ENCODE measurements at regions of chr3 and their contacts with region 1.

Region 1: DNA sequence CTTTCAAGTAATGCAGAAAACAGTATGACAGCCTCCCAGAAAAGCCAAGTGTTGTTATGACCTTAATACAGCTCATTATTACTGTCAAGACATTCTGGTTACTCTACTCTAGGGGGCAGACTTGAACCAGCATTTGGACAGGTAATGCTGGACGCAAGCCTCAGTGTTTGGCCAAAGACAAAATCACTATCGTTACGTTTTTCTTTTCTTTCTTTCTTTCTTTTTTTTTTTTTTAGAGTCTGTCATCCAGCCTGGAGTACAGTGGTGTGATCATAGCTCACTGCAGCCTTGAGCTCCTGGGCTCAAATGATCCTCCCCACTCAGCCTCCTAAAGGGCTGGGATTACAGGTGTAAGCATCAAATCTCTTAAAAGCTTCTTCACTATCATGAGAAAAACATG is 29.4 kb upstream of the TMEM45A start:
- DNase-seq: peak in 1 of 3 donors; percentile 52
- ATAC-seq: peak; percentile 92 to 96 (median 96)
- H3K4me3 ChIP-seq: no peak overlapping the region
- H3K27ac ChIP-seq: no peak overlapping the region
- H3K4me1 ChIP-seq: no peaks in the 10 kb centered on the region
- H3K27me3 ChIP-seq: no peaks in the 10 kb centered on the region
- CTCF ChIP-seq: peak; percentile 67 to 89 (median 74)
- POLR2A ChIP-seq: no peak

Region 2: GRCh38 chr3:100231668-100232067 is 231.3 kb before region 1 on chr3:
- intact Hi-C with region 1: no loop called
- DNase-seq: no peak
- ATAC-seq: no peak
- H3K4me3 ChIP-seq: no peak overlapping the region
- H3K27ac ChIP-seq: no peak overlapping the region
- H3K4me1 ChIP-seq: no peaks in the 10 kb centered on the region
- H3K27me3 ChIP-seq: no peaks in the 10 kb centered on the region
- CTCF ChIP-seq: no peak
- POLR2A ChIP-seq: no peak

Region 3: GRCh38 chr3:100386437-100387074 is 76.4 kb before region 1 on chr3:
- intact Hi-C with region 1: no loop called
- DNase-seq: no peak
- ATAC-seq: peak; percentile 71 to 83 (median 76)
- H3K4me3 ChIP-seq: no peak overlapping the region
- H3K27ac ChIP-seq: peak overlapping the region in 1 of 3 donors; percentile 7
- H3K4me1 ChIP-seq: peaks cover 0 to 24% (median 7%) of the 10 kb centered on the region in 4 donors
- H3K27me3 ChIP-seq: no peaks in the 10 kb centered on the region
- CTCF ChIP-seq: no peak
- POLR2A ChIP-seq: no peak

Region 4: DNA sequence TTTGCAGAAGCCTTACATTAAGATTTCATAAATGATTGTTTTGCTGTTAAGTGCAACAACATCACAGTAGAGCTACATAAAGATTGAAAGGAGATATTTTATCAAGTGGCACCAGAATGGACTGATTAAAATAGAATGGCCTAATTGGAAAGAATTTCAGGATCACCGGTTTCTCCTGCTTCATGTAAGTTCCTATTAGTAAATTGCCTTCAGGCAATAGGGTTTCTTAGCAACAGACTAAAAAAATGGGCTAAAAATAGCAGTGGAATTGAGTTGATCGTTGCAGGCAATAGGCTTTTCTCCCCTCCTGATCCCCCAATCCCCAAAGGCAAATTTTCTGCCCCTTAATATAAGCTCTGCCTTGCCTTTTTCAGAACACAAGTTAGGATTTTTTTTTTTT is 60.7 kb before region 1 on chr3:
- intact Hi-C with region 1: no loop called
- DNase-seq: no peak
- ATAC-seq: no peak
- H3K4me3 ChIP-seq: peak overlapping the region; percentile 80 to 91 (median 84)
- H3K27ac ChIP-seq: peak overlapping the region; percentile 75 to 93 (median 84)
- H3K4me1 ChIP-seq: peaks cover 0 to 26% (median 4%) of the 10 kb centered on the region in 4 donors
- H3K27me3 ChIP-seq: no peaks in the 10 kb centered on the region
- CTCF ChIP-seq: no peak
- POLR2A ChIP-seq: no peak

Region 5: DNA sequence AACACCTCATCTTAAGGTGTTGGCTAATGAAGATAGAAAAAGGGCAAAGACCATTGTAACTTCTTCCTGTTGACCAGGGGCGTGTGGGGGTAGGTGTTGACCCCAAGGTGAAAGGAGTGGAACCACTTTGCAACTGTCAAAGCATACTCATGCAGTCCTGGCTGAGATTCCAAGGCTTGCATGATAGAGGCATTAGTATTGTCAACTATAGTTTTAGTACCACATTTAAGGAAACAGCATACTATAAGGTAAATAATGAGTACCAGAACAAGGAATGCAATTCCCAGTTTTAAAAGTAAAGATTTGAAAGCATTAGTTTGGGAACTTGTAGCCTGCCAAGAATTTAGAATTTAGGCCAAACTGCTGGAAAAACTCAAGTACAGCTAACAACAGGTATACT is 118.6 kb after region 1 on chr3:
- intact Hi-C with region 1: loop called in 1 of 2 experiments (anchors 10 kb)
- DNase-seq: no peak
- ATAC-seq: no peak
- H3K4me3 ChIP-seq: no peak overlapping the region
- H3K27ac ChIP-seq: no peak overlapping the region
- H3K4me1 ChIP-seq: peaks cover 0 to 6% (median 0%) of the 10 kb centered on the region in 4 donors
- H3K27me3 ChIP-seq: no peaks in the 10 kb centered on the region
- CTCF ChIP-seq: no peak
- POLR2A ChIP-seq: no peak

Measured in right lobe of liver (tissue), 6 donors.